Endothelial cell of umbilical vein (primary cell): ENCODE measurements at regions of chr14 and their contacts with region 1.

Region 1: DNA sequence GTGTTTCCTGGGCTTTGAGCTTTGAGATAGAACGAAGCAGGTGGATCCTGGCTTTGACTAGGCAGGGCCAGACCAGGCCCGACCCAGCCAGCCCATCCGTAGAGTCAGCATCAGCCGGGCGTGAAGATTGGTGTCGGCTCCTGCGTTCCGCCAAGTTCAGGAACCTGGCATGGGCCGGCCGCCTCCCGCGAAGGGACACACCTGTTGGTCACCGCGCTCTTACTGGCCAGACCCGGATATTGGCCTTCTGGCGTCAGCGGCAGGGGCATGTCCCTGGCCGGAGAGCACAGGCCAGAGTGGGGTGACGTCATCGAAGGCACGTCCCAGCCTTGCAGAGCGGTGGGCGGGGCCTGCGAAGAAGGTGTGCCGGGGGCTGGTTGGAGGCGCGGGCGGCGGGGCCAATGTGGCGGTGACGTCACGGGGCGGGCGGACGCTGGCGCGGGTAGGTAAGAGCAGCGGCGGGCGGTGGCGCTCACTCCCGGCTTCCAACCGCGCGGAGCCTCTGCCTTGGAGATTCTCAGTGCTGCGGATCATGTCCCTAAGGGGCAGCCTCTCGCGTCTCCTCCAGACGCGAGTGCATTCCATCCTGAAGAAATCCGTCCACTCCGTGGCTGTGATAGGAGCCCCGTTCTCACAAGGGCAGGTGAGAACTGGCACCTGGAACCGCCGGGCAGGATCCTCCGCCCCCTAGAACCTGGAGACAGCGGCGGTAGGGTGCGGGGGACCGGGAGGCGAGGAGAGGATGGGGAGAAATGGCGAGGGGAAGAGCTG is at the start of gene ARG2:
- DNase-seq: peak; percentile 96
- H3K4me3 ChIP-seq: peak within 1 kb of the TSS; percentile 63 to 73 (median 67)
- H3K27ac ChIP-seq: peak within 1 kb of the TSS; percentile 71
- H3K4me1 ChIP-seq: peaks cover 28% of the 10 kb centered on the region
- H3K27me3 ChIP-seq: peaks cover 2 to 4% of the 10 kb centered on the region in 2 experiments
- CTCF ChIP-seq: no peak
- POLR2A ChIP-seq: no peak
- total RNA-seq, gene ARG2: 19.8 and 22.5 TPM in 2 replicates

Region 2: DNA sequence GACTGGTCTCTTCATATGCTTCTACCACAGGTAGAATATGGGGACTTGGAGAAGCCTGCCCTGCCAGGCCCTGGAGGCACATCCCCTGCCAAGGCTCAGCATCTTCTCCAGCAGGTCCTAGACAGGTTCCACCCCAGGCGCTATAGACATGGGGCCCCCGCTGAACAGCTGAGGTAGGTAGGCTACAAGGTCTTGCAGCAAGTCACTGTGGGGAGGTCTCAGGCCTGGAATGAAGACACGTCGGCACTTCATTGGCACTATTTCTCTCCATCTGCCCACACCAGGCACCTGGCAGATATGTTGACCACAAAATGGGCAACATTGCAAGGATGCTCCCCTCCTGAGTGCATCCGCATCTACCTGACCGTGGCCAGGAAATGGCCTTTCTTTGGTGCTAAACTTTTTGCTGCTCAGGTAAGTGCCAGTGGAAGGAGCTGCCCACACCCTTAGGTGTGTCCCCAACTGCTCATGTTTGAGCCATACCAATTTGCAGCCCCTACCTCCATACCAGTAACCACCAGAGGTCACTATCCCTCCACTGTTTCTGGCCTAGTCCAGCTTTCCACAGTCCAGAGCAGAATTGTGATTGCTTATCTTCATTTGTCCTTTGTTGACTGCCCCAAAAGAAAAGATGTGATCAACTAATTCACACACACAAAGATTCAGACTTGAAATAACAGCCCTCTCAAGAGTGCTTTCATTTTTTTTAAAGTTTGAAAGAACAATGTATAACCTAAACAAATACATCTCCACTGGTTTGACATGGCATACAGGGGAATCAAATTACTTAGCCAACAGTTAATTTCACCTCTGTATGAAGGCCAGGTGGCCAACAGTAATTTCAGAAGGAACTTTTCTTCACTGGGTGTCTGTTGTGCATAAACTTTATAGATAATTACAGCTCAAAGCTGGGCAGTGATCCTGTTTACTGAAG is 35.7 kb before region 1 on chr14:
- CTCF ChIA-PET with region 1: interaction called, 12 read pairs
- POLR2A ChIA-PET with region 1: no interaction called
- dilution Hi-C with region 1: no loop called
- intact Hi-C with region 1: loop called (anchors 1 kb)
- DNase-seq: peak; percentile 53
- H3K4me3 ChIP-seq: no peak overlapping the region
- H3K27ac ChIP-seq: no peak overlapping the region
- H3K4me1 ChIP-seq: no peaks in the 10 kb centered on the region
- H3K27me3 ChIP-seq: peaks cover 0 to 2% of the 10 kb centered on the region in 2 experiments
- CTCF ChIP-seq: peak; percentile 56 to 76
- POLR2A ChIP-seq: no peak

Region 3: GRCh38 chr14:67630186-67630585 is 10.6 kb after region 1 on chr14:
- CTCF ChIA-PET with region 1: interaction called, 13 read pairs
- POLR2A ChIA-PET with region 1: no interaction called
- dilution Hi-C with region 1: no loop called
- intact Hi-C with region 1: no loop called
- DNase-seq: no peak
- H3K4me3 ChIP-seq: no peak overlapping the region
- H3K27ac ChIP-seq: no peak overlapping the region
- H3K4me1 ChIP-seq: no peaks in the 10 kb centered on the region
- H3K27me3 ChIP-seq: no peaks in the 10 kb centered on the region
- CTCF ChIP-seq: no peak
- POLR2A ChIP-seq: no peak

Region 4: GRCh38 chr14:67644428-67644827 is 24.8 kb after region 1 on chr14:
- CTCF ChIA-PET with region 1: interaction called, 21 read pairs
- POLR2A ChIA-PET with region 1: no interaction called
- dilution Hi-C with region 1: no loop called
- intact Hi-C with region 1: loop called (anchors 1 kb)
- DNase-seq: no peak
- H3K4me3 ChIP-seq: no peak overlapping the region
- H3K27ac ChIP-seq: no peak overlapping the region
- H3K4me1 ChIP-seq: no peaks in the 10 kb centered on the region
- H3K27me3 ChIP-seq: no peaks in the 10 kb centered on the region
- CTCF ChIP-seq: no peak
- POLR2A ChIP-seq: no peak

Region 5: DNA sequence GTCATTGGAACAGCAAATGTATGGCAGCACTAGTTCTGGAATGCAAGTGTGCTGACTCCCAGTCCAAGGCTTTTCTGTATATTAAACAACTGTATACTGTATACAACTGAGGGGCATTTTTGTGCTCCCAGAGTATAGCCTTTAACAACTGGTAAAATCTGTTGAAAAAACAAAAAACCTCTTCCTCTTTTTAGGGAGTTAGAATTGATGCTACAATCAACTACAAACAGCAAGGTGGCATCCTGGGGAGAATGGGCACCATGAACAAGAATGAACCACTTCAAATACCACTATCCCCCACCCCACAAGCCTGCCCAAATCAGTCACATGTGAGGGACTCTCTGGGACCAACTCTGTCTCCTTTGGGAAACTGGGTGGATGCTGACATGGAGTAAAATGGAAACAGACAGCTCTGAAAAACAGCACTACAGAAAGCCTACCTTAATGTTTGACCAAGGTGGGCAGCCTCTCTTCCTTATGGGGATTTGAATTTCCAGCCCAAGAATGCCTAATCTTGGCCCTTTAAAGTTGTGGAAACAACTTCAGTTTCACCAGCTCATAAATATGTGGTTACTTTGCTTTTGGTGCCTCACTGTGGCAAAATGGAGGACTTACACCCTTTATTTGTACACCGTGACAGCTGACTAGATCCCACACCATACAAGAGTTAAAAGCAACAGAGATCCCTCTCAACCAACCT is 47.3 kb after region 1 on chr14:
- CTCF ChIA-PET with region 1: interaction called, 437 read pairs
- POLR2A ChIA-PET with region 1: no interaction called
- dilution Hi-C with region 1: no loop called
- intact Hi-C with region 1: loop called (anchors 1 kb)
- DNase-seq: peak; percentile 78
- H3K4me3 ChIP-seq: no peak overlapping the region
- H3K27ac ChIP-seq: no peak overlapping the region
- H3K4me1 ChIP-seq: no peaks in the 10 kb centered on the region
- H3K27me3 ChIP-seq: no peaks in the 10 kb centered on the region
- CTCF ChIP-seq: peak; percentile 39 to 50
- POLR2A ChIP-seq: no peak

Region 6: GRCh38 chr14:67695394-67695949 is 75.8 kb after region 1 on chr14 and contains the start of gene RDH11:
- CTCF ChIA-PET with region 1: interaction called, 7 read pairs
- POLR2A ChIA-PET with region 1: no interaction called
- dilution Hi-C with region 1: no loop called
- intact Hi-C with region 1: loop called (anchors 1 kb)
- DNase-seq: peak; percentile 89
- H3K4me3 ChIP-seq: peak within 1 kb of the TSS; percentile 77 to 87 (median 78)
- H3K27ac ChIP-seq: peak within 1 kb of the TSS; percentile 61
- H3K4me1 ChIP-seq: peaks cover 10% of the 10 kb centered on the region
- H3K27me3 ChIP-seq: no peaks in the 10 kb centered on the region
- CTCF ChIP-seq: no peak
- POLR2A ChIP-seq: peak; percentile 94
- total RNA-seq, gene RDH11: 79.8 and 90.2 TPM in 2 replicates